Lower lobe of right lung (tissue), 2 donors: ENCODE measurements at regions of chr6 and their contacts with region 1.

Region 1: DNA sequence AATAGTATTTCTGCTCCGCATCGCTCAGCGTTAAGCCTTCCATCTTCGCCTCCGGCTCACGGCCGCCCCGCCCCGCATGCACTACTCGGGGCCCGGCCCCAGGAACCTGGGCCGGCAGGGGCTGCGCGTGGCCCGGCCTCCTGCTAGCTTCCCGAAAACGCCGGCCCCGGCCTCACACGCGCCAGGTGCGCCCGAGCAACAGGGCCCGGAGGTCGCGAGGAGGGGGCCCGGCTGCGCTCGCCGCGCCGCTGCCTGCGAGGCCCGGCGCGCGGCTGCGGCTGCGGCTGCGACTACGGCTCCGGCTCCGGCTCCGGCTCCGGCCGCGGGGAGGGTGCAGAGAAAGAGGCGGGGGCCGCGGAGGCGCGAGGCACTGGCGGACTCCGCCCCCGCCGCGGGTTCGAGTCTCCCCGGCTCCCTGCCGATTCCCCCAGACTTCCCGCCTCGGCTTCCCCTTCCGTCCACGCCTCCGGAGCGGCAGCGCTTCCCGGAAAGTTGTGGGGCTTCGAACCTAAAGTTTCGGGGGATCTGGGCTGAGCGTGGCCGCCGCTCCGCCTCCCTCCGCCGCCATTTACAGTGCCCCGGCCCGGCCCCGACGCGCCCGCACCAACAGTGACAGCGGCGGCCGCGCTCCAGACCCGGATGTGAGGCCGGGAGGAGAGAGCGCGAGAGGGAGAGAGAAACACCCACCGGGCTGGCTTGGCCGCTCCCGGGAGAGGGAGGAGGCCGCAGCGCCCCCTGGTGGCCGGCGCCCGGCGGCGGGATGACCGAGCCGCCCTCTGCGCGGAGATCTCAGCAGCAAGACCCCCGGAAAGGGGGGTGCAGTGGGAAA is at the start of gene REPS1:
- DNase-seq: peak; percentile 94
- ATAC-seq: peak; percentile 98 to 99
- H3K4me3 ChIP-seq: peak within 1 kb of the TSS; percentile 91
- H3K27ac ChIP-seq: peak within 1 kb of the TSS; percentile 96
- H3K4me1 ChIP-seq: peaks cover 47% of the 10 kb centered on the region
- H3K27me3 ChIP-seq: no peaks in the 10 kb centered on the region
- CTCF ChIP-seq: peak; percentile 98
- total RNA-seq, gene REPS1: 39.1 TPM

Region 2: GRCh38 chr6:138817822-138818308 is 170.0 kb before region 1 on chr6:
- intact Hi-C with region 1: loop called (anchors 10 kb)
- DNase-seq: peak; percentile 79
- ATAC-seq: peak; percentile 92 to 95
- H3K4me3 ChIP-seq: no peak overlapping the region
- H3K27ac ChIP-seq: peak overlapping the region; percentile 61
- H3K4me1 ChIP-seq: no peaks in the 10 kb centered on the region
- H3K27me3 ChIP-seq: no peaks in the 10 kb centered on the region
- CTCF ChIP-seq: no peak

Region 3: DNA sequence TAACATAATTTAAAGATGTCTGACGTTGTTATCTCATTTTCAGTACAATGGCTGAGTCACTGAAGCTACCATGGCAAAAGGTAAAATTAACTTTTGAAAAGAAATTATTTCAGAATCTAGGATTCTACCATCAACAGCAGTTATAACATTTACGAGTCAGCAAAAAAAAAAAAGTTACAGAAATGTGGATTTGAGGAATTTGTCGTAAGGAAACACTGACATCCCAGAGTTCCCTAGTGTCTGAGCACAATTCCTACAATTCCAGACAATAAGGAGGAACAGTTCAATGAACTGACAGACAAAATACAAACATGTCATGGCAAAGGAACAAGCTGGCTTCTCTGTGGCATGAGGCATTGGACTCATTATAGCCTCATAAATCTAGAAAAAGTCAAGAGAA is 59.8 kb after region 1 on chr6:
- intact Hi-C with region 1: no loop called
- DNase-seq: no peak
- ATAC-seq: no peak
- H3K4me3 ChIP-seq: no peak overlapping the region
- H3K27ac ChIP-seq: no peak overlapping the region
- H3K4me1 ChIP-seq: no peaks in the 10 kb centered on the region
- H3K27me3 ChIP-seq: no peaks in the 10 kb centered on the region
- CTCF ChIP-seq: no peak

Region 4: DNA sequence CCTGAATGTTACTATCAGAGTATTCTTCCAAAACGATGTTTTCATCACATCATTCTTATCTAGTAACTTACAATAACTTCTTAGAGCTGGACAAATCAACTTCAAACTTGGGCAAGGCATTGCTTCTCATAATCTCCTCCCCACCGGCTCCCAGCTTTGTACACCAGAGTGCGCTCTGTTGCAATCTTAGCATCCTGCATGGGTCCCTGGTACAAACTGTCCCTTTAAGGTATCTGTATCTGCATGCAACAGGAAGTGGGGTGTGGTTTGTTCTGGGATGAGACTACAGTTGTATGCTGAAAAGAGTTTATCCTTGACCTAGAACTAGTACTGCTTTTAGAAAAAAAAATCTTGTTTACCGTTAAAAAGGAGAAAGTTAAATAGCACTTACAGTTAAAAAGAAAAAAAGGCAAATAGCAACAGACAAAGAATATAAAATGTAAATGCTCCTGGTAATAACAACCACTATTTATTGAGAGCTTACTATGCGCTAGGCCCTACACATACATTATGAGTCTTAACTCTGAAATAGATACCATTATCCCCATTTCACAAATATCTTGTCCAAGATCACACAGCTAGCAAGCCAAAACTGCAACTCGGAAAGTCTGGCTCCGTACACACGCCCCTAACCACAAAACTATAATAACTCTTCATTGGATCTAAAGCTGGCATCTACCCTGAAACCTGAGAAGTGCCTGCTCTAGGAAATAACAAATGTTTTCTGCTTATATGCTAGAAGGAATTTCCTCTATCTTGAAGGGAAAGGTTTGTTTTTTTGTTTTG is 137.2 kb after region 1 on chr6:
- intact Hi-C with region 1: no loop called
- DNase-seq: peak; percentile 67
- ATAC-seq: peak; percentile 95 to 97
- H3K4me3 ChIP-seq: no peak overlapping the region
- H3K27ac ChIP-seq: peak overlapping the region; percentile 54
- H3K4me1 ChIP-seq: peaks cover 14% of the 10 kb centered on the region
- H3K27me3 ChIP-seq: no peaks in the 10 kb centered on the region
- CTCF ChIP-seq: peak; percentile 60